GM12878 (cell line): ENCODE measurements at regions of chrX and their contacts with region 1.

Region 1: GRCh38 chrX:40402831-40403533 is 177.8 kb upstream of the ATP6AP2 start:
- DNase-seq: no peak
- ATAC-seq: peak; percentile 82
- H3K4me3 ChIP-seq: no peak overlapping the region
- H3K27ac ChIP-seq: no peak overlapping the region
- H3K4me1 ChIP-seq: peaks cover 3% of the 10 kb centered on the region; the same call in 1 of the 2 replicates
- H3K27me3 ChIP-seq: no peaks in the 10 kb centered on the region
- CTCF ChIP-seq: no peak
- EP300 ChIP-seq: no peak
- POLR2A ChIP-seq: no peak
- RAD21 ChIP-seq: no peak

Region 2: GRCh38 chrX:40314070-40314469 is 88.9 kb before region 1 on chrX:
- CTCF ChIA-PET with region 1: no interaction called
- POLR2A ChIA-PET with region 1: no interaction called
- RAD21 ChIA-PET with region 1: no interaction called
- SMC1A ChIA-PET with region 1: no interaction called
- in situ Hi-C with region 1: no loop called
- intact Hi-C with region 1: loop called (anchors 10 kb)
- DNase-seq: no peak
- ATAC-seq: peak; percentile 37; the same call in 1 of the 3 replicates
- H3K4me3 ChIP-seq: no peak overlapping the region
- H3K27ac ChIP-seq: no peak overlapping the region
- H3K4me1 ChIP-seq: no peaks in the 10 kb centered on the region
- H3K27me3 ChIP-seq: no peaks in the 10 kb centered on the region
- CTCF ChIP-seq: peak in 2 of 3 experiments; percentile 11 to 29; a peak in 1 of 6 replicates
- EP300 ChIP-seq: no peak
- POLR2A ChIP-seq: no peak
- RAD21 ChIP-seq: 0 out of 2 replicates have a peak, but pooled peaks have one; percentile 11